Activated CD4-positive, alpha-beta T cell treated with anti-CD3 and anti-CD28 coated beads for 36 hours (primary cell): ENCODE measurements at regions of chr4 and their contacts with region 1.

Region 1: DNA sequence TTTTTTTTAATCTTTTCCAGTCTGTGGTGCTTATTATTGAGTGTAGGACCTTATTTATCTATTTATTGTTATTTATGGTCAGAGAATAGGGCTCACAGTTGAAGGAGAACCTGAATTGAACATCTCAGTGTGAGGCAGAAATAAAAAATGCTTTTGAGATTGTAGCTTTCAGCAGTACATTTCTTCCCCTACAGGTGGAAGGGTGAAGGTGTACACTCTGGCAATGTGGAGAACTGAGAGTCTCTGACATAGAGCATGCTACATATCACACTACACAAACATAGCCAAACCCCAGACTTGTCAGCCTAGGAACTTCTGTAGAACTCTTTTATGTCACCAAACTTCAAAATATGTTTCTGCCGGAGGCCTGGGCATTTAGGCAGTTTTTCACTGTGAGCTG is 140.2 kb downstream of the STIM2 start:
- DNase-seq: no peak
- ATAC-seq: peak; percentile 53
- H3K4me3 Mint-ChIP-seq: no peak overlapping the region
- H3K27ac Mint-ChIP-seq: peak overlapping the region; percentile 51
- H3K4me1 Mint-ChIP-seq: peaks cover 61% of the 10 kb centered on the region
- H3K27me3 Mint-ChIP-seq: no peaks in the 10 kb centered on the region

Region 2: DNA sequence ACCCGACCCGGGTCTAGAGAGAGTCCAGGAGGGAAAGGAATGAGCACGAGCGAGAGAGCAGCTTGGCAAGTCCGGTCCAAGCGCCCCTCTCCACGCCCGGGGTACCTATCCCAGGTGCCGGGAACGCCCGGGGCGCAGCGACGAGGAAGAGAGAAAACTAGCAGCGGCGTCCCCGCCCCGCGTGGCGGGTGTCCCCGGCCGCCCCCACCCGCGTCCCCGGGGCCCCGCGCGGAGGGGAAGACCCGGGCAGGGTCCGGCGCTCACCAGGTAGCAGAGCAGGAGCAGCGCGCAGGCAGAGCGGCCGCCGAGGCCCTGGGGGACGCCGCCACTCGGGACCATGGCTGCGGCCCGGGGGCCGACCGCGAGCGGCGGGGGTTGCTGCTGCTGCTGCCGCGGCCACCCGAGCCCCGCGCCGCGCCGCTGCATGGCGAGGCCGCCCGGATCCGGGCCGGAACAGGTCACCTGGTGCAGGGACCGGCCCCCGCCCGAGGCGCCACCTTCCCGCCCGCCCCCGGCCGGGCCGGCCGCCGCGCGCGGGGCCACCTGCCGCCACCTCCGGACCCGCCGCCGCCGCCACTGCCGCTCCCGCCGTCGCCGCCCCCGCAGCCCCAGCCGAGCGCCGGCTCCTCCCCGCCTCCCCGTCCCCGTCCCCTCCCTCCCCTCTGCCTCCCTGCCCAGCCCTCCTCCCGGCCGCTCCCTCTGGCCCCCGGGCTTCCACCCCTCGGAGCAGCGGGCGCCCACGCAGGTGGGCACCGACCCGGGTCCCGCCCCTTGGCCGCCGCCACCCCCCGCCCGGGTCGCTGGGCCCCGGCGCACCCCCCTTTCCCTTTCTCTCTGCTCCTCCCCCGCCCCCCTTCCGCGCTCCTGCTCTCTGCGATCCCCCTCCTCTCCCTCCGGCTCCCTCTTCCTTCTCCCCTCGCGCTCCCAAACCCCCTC is 1138.1 kb before region 1 on chr4 and contains the start of gene SEL1L3:
- CTCF ChIA-PET with region 1: no interaction called
- POLR2A ChIA-PET with region 1: no interaction called
- intact Hi-C with region 1: loop called in 1 of 2 experiments (anchors 10 kb)
- DNase-seq: peak; percentile 79
- ATAC-seq: peak; percentile 33
- H3K4me3 Mint-ChIP-seq: peak within 1 kb of the TSS; percentile 94
- H3K27ac Mint-ChIP-seq: peak within 1 kb of the TSS; percentile 96
- H3K4me1 Mint-ChIP-seq: peaks cover 40% of the 10 kb centered on the region
- H3K27me3 Mint-ChIP-seq: no peaks in the 10 kb centered on the region
- total RNA-seq, gene SEL1L3: 31.9 to 34.8 TPM

Region 3: GRCh38 chr4:26583865-26584652 is 416.8 kb before region 1 on chr4 and contains the start of gene TBC1D19:
- CTCF ChIA-PET with region 1: no interaction called
- POLR2A ChIA-PET with region 1: no interaction called
- intact Hi-C with region 1: loop called in 1 of 2 experiments (anchors 5 kb)
- DNase-seq: peak; percentile 93
- ATAC-seq: peak; percentile 96
- H3K4me3 Mint-ChIP-seq: peak within 1 kb of the TSS; percentile 93
- H3K27ac Mint-ChIP-seq: peak within 1 kb of the TSS; percentile 92
- H3K4me1 Mint-ChIP-seq: peaks cover 24% of the 10 kb centered on the region
- H3K27me3 Mint-ChIP-seq: peaks cover 1% of the 10 kb centered on the region
- total RNA-seq, gene TBC1D19: 5.0 to 5.3 TPM

Region 4: DNA sequence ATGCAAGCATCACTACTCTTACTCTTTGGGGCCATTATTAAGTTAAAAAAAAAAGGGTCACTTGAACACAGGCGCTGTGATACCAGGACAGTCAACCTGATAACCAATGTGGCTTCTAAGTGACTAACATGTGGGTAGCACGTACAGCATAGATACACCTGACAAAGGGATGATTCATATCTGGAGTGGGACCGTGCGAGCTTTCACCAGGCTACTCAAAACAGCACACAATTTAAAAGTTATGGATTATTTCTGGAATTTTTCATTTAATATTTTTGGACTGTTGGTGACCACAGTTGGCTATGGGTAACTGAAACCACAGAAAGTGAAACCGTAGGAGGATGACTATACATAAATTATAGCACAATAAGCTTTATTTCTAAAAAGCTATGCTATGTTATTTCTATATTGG is 254.0 kb before region 1 on chr4:
- CTCF ChIA-PET with region 1: interaction called, 6 read pairs
- POLR2A ChIA-PET with region 1: no interaction called
- intact Hi-C with region 1: loop called (anchors 1 to 5 kb)
- DNase-seq: peak; percentile 69
- ATAC-seq: peak; percentile 100
- H3K4me3 Mint-ChIP-seq: no peak overlapping the region
- H3K27ac Mint-ChIP-seq: no peak overlapping the region
- H3K4me1 Mint-ChIP-seq: peaks cover 14% of the 10 kb centered on the region
- H3K27me3 Mint-ChIP-seq: no peaks in the 10 kb centered on the region

Region 5: GRCh38 chr4:26885912-26886274 is 114.9 kb before region 1 on chr4:
- CTCF ChIA-PET with region 1: interaction called, 16 read pairs
- POLR2A ChIA-PET with region 1: interaction called, 3 read pairs
- intact Hi-C with region 1: loop called (anchors 1 to 2 kb)
- DNase-seq: peak; percentile 29
- ATAC-seq: peak; percentile 63
- H3K4me3 Mint-ChIP-seq: peak overlapping the region; percentile 67
- H3K27ac Mint-ChIP-seq: peak overlapping the region; percentile 92
- H3K4me1 Mint-ChIP-seq: peaks cover 64% of the 10 kb centered on the region
- H3K27me3 Mint-ChIP-seq: no peaks in the 10 kb centered on the region